Caco-2 (cell line): ENCODE measurements at regions of chr3 and their contacts with region 1.

Region 1: GRCh38 chr3:150495563-150496168 is 50.6 kb downstream of the SERP1 start:
- DNase-seq: peak in 1 of 2 experiments; percentile 42
- H3K4me3 ChIP-seq: no peak overlapping the region
- H3K4me3 Mint-ChIP-seq: no peak overlapping the region
- H3K27ac Mint-ChIP-seq: no peak overlapping the region
- H3K4me1 ChIP-seq: no peaks in the 10 kb centered on the region; the same call in 1 of the 2 replicates
- H3K4me1 Mint-ChIP-seq: no peaks in the 10 kb centered on the region
- H3K27me3 ChIP-seq: no peaks in the 10 kb centered on the region
- H3K27me3 Mint-ChIP-seq: no peaks in the 10 kb centered on the region
- CTCF ChIP-seq: peak; percentile 62

Region 2: GRCh38 chr3:149969940-149970715 is 525.5 kb before region 1 on chr3:
- CTCF ChIA-PET with region 1: no interaction called
- POLR2A ChIA-PET with region 1: no interaction called
- intact Hi-C with region 1: loop called (anchors 10 kb)
- DNase-seq: peak; percentile 77 to 84
- H3K4me3 ChIP-seq: peak overlapping the region; percentile 91
- H3K4me3 Mint-ChIP-seq: peak overlapping the region; percentile 78
- H3K27ac Mint-ChIP-seq: peak overlapping the region; percentile 84
- H3K4me1 ChIP-seq: no peaks in the 10 kb centered on the region
- H3K4me1 Mint-ChIP-seq: no peaks in the 10 kb centered on the region
- H3K27me3 ChIP-seq: no peaks in the 10 kb centered on the region
- H3K27me3 Mint-ChIP-seq: peaks cover 3% of the 10 kb centered on the region
- CTCF ChIP-seq: no peak

Region 3: DNA sequence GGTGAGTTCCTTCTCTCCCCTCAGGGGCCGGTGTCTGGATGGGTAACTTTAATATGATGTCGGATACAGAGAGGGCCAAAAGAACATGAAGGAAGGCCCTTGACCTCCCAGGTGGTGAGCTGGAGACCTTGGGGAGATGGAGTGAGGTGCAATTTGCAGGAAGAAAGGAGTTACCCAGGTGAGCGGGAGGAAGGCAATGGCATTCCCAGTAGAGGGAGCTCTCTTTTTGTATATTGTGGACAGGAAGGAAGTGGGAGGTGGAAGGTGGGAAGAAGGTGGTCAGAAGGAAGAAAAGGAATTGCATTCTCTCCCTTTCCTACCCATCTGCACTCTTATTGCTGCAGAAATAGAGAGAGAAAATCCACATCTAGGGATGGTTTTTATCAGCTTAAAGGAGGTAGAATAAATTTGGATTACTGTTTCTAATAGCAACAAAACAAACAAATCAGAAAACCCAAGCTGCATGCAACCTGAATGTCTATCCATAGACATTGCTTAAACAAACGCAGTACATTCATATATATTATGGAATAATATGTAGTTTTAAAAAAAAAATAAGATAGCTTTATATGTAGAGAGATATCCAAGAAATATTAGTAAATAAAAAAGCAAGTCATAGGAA is 256.6 kb before region 1 on chr3:
- CTCF ChIA-PET with region 1: interaction called, 23 read pairs
- POLR2A ChIA-PET with region 1: no interaction called
- intact Hi-C with region 1: loop called (anchors 1 kb)
- DNase-seq: peak; percentile 54 to 64
- H3K4me3 ChIP-seq: no peak overlapping the region
- H3K4me3 Mint-ChIP-seq: no peak overlapping the region
- H3K27ac Mint-ChIP-seq: no peak overlapping the region
- H3K4me1 ChIP-seq: peaks cover 28% of the 10 kb centered on the region
- H3K4me1 Mint-ChIP-seq: peaks cover 26% of the 10 kb centered on the region
- H3K27me3 ChIP-seq: no peaks in the 10 kb centered on the region
- H3K27me3 Mint-ChIP-seq: no peaks in the 10 kb centered on the region
- CTCF ChIP-seq: peak; percentile 65 to 86

Region 4: GRCh38 chr3:150286390-150287147 is 209.1 kb before region 1 on chr3:
- CTCF ChIA-PET with region 1: interaction called, 12 read pairs
- POLR2A ChIA-PET with region 1: no interaction called
- intact Hi-C with region 1: loop called (anchors 1 kb)
- DNase-seq: peak in 1 of 2 experiments; percentile 51
- H3K4me3 ChIP-seq: no peak overlapping the region
- H3K4me3 Mint-ChIP-seq: no peak overlapping the region
- H3K27ac Mint-ChIP-seq: peak overlapping the region; percentile 77
- H3K4me1 ChIP-seq: peaks cover 12% of the 10 kb centered on the region
- H3K4me1 Mint-ChIP-seq: no peaks in the 10 kb centered on the region
- H3K27me3 ChIP-seq: no peaks in the 10 kb centered on the region
- H3K27me3 Mint-ChIP-seq: no peaks in the 10 kb centered on the region
- CTCF ChIP-seq: peak; percentile 57 to 71

Region 5: DNA sequence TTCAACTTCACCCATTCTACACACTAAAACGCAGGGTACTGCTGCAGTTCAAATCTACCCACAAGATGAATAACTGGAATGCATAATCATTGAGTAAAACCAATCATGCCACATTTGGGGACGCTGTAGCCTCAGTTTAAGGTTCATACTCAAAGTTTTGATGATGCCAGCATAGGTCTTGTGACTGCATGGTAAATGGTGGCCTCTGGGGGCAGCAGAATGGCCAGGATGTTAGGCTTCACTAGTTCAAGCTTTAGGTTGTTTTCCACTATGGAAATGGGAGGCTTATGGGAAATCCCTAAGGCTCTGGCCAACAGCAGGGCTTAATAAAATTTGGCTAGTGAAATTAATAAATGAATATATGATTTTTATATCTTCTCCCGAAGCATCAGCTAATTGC is 191.9 kb before region 1 on chr3:
- CTCF ChIA-PET with region 1: no interaction called
- POLR2A ChIA-PET with region 1: no interaction called
- intact Hi-C with region 1: loop called (anchors 1 kb)
- DNase-seq: peak; percentile 45
- H3K4me3 ChIP-seq: no peak overlapping the region
- H3K4me3 Mint-ChIP-seq: no peak overlapping the region
- H3K27ac Mint-ChIP-seq: no peak overlapping the region
- H3K4me1 ChIP-seq: peaks cover 8% of the 10 kb centered on the region; the same call in 1 of the 2 replicates
- H3K4me1 Mint-ChIP-seq: peaks cover 16% of the 10 kb centered on the region
- H3K27me3 ChIP-seq: no peaks in the 10 kb centered on the region
- H3K27me3 Mint-ChIP-seq: no peaks in the 10 kb centered on the region
- CTCF ChIP-seq: peak; percentile 40 to 50

Region 6: DNA sequence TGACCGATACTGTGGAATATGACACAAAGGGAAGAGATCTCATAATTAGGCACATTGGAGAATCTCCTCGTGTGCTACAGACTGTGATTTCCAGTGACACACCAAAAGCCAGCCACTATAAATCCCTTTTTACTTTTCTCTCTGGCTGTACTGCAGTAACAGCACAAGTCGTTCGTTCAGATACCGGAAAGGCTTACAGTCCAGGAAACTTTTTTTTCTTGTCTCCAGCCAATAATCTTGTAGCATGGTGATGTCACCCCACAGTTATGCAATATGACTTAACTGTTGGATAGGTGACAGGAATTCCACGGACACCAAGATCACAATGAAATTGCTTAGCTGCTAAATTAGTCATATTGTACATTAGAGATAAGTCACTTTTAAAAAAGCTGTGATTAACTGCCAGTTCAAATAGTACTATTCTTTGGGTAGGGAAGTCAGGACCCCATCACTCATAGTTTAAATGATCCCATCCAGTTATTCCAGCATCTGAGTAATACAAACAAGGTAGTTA is 123.9 kb before region 1 on chr3:
- CTCF ChIA-PET with region 1: no interaction called
- POLR2A ChIA-PET with region 1: no interaction called
- intact Hi-C with region 1: loop called (anchors 2 kb)
- DNase-seq: peak; percentile 72 to 78
- H3K4me3 ChIP-seq: peak overlapping the region; percentile 43
- H3K4me3 Mint-ChIP-seq: peak overlapping the region; percentile 71
- H3K27ac Mint-ChIP-seq: peak overlapping the region; percentile 86
- H3K4me1 ChIP-seq: peaks cover 46% of the 10 kb centered on the region
- H3K4me1 Mint-ChIP-seq: peaks cover 23% of the 10 kb centered on the region
- H3K27me3 ChIP-seq: no peaks in the 10 kb centered on the region
- H3K27me3 Mint-ChIP-seq: no peaks in the 10 kb centered on the region
- CTCF ChIP-seq: no peak

Region 7: GRCh38 chr3:150391200-150391599 is 104.5 kb before region 1 on chr3:
- CTCF ChIA-PET with region 1: no interaction called
- POLR2A ChIA-PET with region 1: no interaction called
- intact Hi-C with region 1: no loop called
- DNase-seq: no peak
- H3K4me3 ChIP-seq: no peak overlapping the region
- H3K4me3 Mint-ChIP-seq: no peak overlapping the region
- H3K27ac Mint-ChIP-seq: no peak overlapping the region
- H3K4me1 ChIP-seq: 0 out of 2 replicates have a peak, but pooled peaks cover 9% of the 10 kb centered on the region
- H3K4me1 Mint-ChIP-seq: peaks cover 10% of the 10 kb centered on the region
- H3K27me3 ChIP-seq: no peaks in the 10 kb centered on the region
- H3K27me3 Mint-ChIP-seq: no peaks in the 10 kb centered on the region
- CTCF ChIP-seq: no peak

Region 8: DNA sequence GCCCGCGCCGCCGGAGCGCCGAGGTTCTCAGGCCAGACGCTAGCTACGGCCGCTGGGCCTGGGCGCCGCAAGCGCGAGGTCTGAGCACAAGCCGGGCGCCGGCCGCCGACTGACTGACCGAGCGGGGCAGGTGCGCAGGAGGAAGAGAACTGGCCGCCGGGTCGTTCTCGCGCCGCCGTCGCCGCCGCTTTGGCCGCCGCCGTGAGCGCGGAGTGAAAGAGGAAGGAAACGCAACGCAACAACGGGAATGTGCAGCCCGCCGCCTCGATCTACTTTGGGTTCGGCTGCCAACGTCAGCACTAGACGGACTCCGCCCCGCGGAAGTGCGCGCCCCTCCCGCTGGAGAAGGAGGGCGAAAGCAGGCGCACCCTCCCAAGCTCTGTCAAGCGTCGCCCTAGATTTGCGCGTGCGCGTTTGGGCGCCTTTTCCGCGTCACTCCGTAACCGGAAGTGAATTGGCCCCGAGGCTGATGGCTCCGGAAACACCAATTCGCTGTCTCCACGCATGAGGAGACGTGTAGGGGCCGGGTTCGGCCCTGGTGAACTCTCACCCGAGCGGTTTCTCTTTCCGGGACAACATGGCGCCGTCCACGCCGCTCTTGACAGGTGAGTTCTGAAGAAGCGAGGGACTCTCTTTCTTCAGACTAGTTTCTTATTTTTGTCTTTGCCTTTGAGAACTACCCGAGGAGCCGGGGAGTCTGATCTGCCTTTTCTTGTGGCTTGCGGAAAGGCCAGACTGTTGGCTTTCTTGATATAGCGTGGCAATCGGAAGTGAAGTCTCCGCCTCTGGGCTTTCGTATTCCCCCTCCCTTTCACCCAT is 50.8 kb after region 1 on chr3 and contains the starts of genes EIF2A and SERP1:
- CTCF ChIA-PET with region 1: no interaction called
- POLR2A ChIA-PET with region 1: no interaction called
- intact Hi-C with region 1: no loop called
- DNase-seq: peak; percentile 98
- H3K4me3 ChIP-seq: peak within 1 kb of the TSS; percentile 99
- H3K4me3 Mint-ChIP-seq: peak within 1 kb of the TSS; percentile 87
- H3K27ac Mint-ChIP-seq: peak within 1 kb of the TSS; percentile 99
- H3K4me1 ChIP-seq: peaks cover 11% of the 10 kb centered on the region
- H3K4me1 Mint-ChIP-seq: peaks cover 6% of the 10 kb centered on the region
- H3K27me3 ChIP-seq: no peaks in the 10 kb centered on the region
- H3K27me3 Mint-ChIP-seq: no peaks in the 10 kb centered on the region
- CTCF ChIP-seq: no peak
- total RNA-seq, gene EIF2A: 97.1 and 103 TPM in 2 replicates
- total RNA-seq, gene SERP1: 89.4 and 90.8 TPM in 2 replicates